ENCODE measurements at regions of chr7 and their contacts with region 1.

Region 1: GRCh38 chr7:157336383-157337315 is at the start of gene DNAJB6:
- DNase-seq: peak; percentile 91
- ATAC-seq: peak; percentile 56
- H3K4me3 ChIP-seq: peak within 1 kb of the TSS; percentile 88
- H3K27ac ChIP-seq: peak within 1 kb of the TSS; percentile 75
- H3K4me1 ChIP-seq: peaks cover 14% of the 10 kb centered on the region; the same call in 1 of the 2 replicates
- H3K27me3 ChIP-seq: no peaks in the 10 kb centered on the region
- CTCF ChIP-seq: no peak
- total RNA-seq, gene DNAJB6: 119 and 151 TPM in 2 replicates

Region 2: GRCh38 chr7:157211690-157212089 is 125.0 kb before region 1 on chr7:
- CTCF ChIA-PET with region 1: no interaction called
- POLR2A ChIA-PET with region 1: no interaction called
- intact Hi-C with region 1: no loop called
- DNase-seq: no peak
- ATAC-seq: no peak
- H3K4me3 ChIP-seq: no peak overlapping the region
- H3K27ac ChIP-seq: no peak overlapping the region
- H3K4me1 ChIP-seq: 0 out of 2 replicates have a peak, but pooled peaks cover under 1% of the 10 kb centered on the region
- H3K27me3 ChIP-seq: no peaks in the 10 kb centered on the region
- CTCF ChIP-seq: no peak

Region 3: GRCh38 chr7:157228864-157229422 is 107.7 kb before region 1 on chr7:
- CTCF ChIA-PET with region 1: no interaction called
- POLR2A ChIA-PET with region 1: no interaction called
- intact Hi-C with region 1: loop called (anchors 1 kb)
- DNase-seq: peak; percentile 45
- ATAC-seq: peak; percentile 80
- H3K4me3 ChIP-seq: no peak overlapping the region
- H3K27ac ChIP-seq: no peak overlapping the region
- H3K4me1 ChIP-seq: 0 out of 2 replicates have a peak, but pooled peaks cover 8% of the 10 kb centered on the region
- H3K27me3 ChIP-seq: no peaks in the 10 kb centered on the region
- CTCF ChIP-seq: peak; percentile 63

Region 4: DNA sequence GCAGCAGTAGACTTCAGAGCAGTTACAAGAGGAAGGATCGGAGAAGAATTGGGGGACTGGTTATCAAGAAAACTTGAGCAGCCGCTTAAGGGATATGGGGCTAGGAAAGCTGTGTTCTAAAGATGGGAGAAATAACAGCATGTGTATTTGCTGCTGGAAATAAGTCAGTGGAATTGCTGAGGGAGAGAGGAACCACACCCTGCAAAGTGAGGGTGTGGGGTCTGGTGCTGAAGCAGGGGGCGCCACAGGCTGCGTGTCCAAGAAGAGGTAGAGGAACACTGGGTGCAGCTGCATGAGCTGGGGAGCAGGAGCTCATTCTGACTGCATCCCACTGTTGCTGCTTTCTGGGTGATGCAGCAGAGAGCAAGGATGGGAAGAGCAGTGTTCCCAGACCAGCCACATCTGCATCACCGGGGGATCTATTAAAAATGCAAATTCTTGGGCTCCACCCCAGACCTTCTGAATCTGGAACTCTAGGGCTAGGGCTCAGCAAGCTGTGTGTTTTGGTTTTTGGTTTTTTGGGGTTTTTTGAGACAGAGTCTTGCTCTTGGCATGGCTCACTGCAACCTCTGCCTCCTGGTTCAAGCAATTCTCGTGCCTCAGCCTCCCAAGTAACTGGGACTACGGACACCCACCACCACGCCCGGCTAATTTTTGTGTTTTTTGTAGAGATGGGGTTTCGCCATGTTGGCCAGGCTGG is 96.9 kb before region 1 on chr7:
- CTCF ChIA-PET with region 1: no interaction called
- POLR2A ChIA-PET with region 1: no interaction called
- intact Hi-C with region 1: no loop called
- DNase-seq: no peak
- ATAC-seq: no peak
- H3K4me3 ChIP-seq: no peak overlapping the region
- H3K27ac ChIP-seq: no peak overlapping the region
- H3K4me1 ChIP-seq: 0 out of 2 replicates have a peak, but pooled peaks cover 11% of the 10 kb centered on the region
- H3K27me3 ChIP-seq: no peaks in the 10 kb centered on the region
- CTCF ChIP-seq: no peak

Region 5: GRCh38 chr7:157299613-157300368 is 36.9 kb before region 1 on chr7:
- CTCF ChIA-PET with region 1: no interaction called
- POLR2A ChIA-PET with region 1: interaction called, 4 read pairs
- intact Hi-C with region 1: loop called (anchors 5 kb)
- DNase-seq: peak; percentile 26
- ATAC-seq: no peak
- H3K4me3 ChIP-seq: no peak overlapping the region
- H3K27ac ChIP-seq: no peak overlapping the region
- H3K4me1 ChIP-seq: peaks cover 27% of the 10 kb centered on the region
- H3K27me3 ChIP-seq: no peaks in the 10 kb centered on the region
- CTCF ChIP-seq: peak; percentile 35; the same call in 1 of the 2 replicates

Region 6: GRCh38 chr7:157318012-157318709 is 18.5 kb before region 1 on chr7:
- CTCF ChIA-PET with region 1: interaction called, 6 read pairs
- POLR2A ChIA-PET with region 1: interaction called, 5 read pairs
- intact Hi-C with region 1: loop called (anchors 1 kb)
- DNase-seq: peak; percentile 76
- ATAC-seq: peak; percentile 100
- H3K4me3 ChIP-seq: no peak overlapping the region
- H3K27ac ChIP-seq: peak overlapping the region; percentile 76
- H3K4me1 ChIP-seq: peaks cover 10% of the 10 kb centered on the region
- H3K27me3 ChIP-seq: no peaks in the 10 kb centered on the region
- CTCF ChIP-seq: no peak

Measured in PC-3 (cell line).